AG04449 (cell line): ENCODE measurements at regions of chr7 and their contacts with region 1.

Region 1: GRCh38 chr7:24381894-24382505 is 98.0 kb downstream of the NPY start:
- DNase-seq: no peak
- H3K4me3 ChIP-seq: no peak overlapping the region
- CTCF ChIP-seq: no peak

Region 2: GRCh38 chr7:23863209-23863798 is 518.7 kb before region 1 on chr7:
- CTCF ChIA-PET with region 1: interaction called, 22 read pairs
- POLR2A ChIA-PET with region 1: no interaction called
- DNase-seq: no peak
- H3K4me3 ChIP-seq: no peak overlapping the region
- CTCF ChIP-seq: peak; percentile 54

Region 3: GRCh38 chr7:23938937-23939552 is 443.0 kb before region 1 on chr7:
- CTCF ChIA-PET with region 1: interaction called, 17 read pairs
- POLR2A ChIA-PET with region 1: no interaction called
- DNase-seq: no peak
- H3K4me3 ChIP-seq: no peak overlapping the region
- CTCF ChIP-seq: peak; percentile 76